Mammary epithelial cell (primary cell): ENCODE measurements at regions of chr10 and their contacts with region 1.

Region 1: GRCh38 chr10:133124357-133125211 is 35.4 kb upstream of the KNDC1 start:
- DNase-seq: no peak
- H3K4me3 ChIP-seq: no peak overlapping the region
- H3K27ac ChIP-seq: no peak overlapping the region
- H3K4me1 ChIP-seq: no peaks in the 10 kb centered on the region
- H3K27me3 ChIP-seq: no peaks in the 10 kb centered on the region
- CTCF ChIP-seq: peak in 1 of 2 donors; percentile 31

Region 2: GRCh38 chr10:132836832-132837540 is 287.6 kb before region 1 on chr10:
- CTCF ChIA-PET with region 1: no interaction called
- dilution Hi-C with region 1: no loop called
- in situ Hi-C with region 1: no loop called
- intact Hi-C with region 1: loop called (anchors 2 kb)
- DNase-seq: peak; percentile 6
- H3K4me3 ChIP-seq: no peak overlapping the region
- H3K27ac ChIP-seq: no peak overlapping the region
- H3K4me1 ChIP-seq: no peaks in the 10 kb centered on the region
- H3K27me3 ChIP-seq: peaks cover 2% of the 10 kb centered on the region
- CTCF ChIP-seq: peak; percentile 50 to 84

Region 3: GRCh38 chr10:132904181-132904819 is 220.3 kb before region 1 on chr10:
- CTCF ChIA-PET with region 1: no interaction called
- dilution Hi-C with region 1: no loop called
- in situ Hi-C with region 1: no loop called
- intact Hi-C with region 1: loop called (anchors 1 kb)
- DNase-seq: peak; percentile 23
- H3K4me3 ChIP-seq: no peak overlapping the region
- H3K27ac ChIP-seq: no peak overlapping the region
- H3K4me1 ChIP-seq: no peaks in the 10 kb centered on the region
- H3K27me3 ChIP-seq: no peaks in the 10 kb centered on the region
- CTCF ChIP-seq: peak; percentile 43 to 53

Region 4: DNA sequence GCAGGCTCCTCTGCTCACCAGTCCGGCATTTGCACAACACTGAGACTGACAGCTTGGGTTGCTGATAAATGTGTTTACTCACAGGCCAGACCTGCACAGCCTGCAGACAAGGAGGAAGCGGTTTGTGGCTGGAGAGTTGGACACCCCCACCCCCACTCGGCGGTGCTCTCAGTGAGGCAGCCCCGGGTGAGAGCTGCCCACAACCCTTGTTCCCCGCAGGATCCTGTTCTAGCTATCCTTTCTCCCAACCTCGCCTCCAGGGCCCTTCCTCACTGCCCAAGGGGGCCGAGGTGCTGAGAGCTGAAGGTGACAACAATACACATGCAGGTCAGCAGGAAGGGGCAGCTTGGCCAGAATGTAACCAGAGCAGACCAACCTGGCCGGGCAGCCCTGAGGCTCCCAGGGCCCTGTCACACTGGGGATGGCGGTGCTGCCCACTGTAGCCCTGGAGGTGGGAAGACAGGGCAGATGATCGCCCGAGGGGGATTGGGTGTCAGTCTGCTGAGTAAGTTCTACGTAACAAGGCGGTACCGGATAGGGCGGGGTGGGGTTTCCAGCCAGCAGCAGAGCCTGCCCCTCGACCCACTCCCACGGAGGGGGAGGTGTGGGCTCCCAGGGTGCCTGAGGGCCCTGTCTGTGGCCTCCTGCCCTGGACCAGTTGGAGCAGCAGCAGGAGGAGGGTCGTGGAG is 154.1 kb after region 1 on chr10:
- CTCF ChIA-PET with region 1: no interaction called
- dilution Hi-C with region 1: no loop called
- in situ Hi-C with region 1: no loop called
- intact Hi-C with region 1: no loop called
- DNase-seq: peak; percentile 89
- H3K4me3 ChIP-seq: no peak overlapping the region
- H3K27ac ChIP-seq: peak overlapping the region; percentile 65
- H3K4me1 ChIP-seq: peaks cover 64% of the 10 kb centered on the region
- H3K27me3 ChIP-seq: no peaks in the 10 kb centered on the region
- CTCF ChIP-seq: peak in 1 of 2 donors; percentile 0